Activated CD8-positive, alpha-beta T cell treated with anti-CD3 and anti-CD28 coated beads, Interleukin-2, amount 10 ng/mL, durations not matched to agents 7 days and 5 days (primary cell): ENCODE measurements at regions of chr11 and their contacts with region 1.

Region 1: GRCh38 chr11:47213985-47214564 is 699 bp upstream of the DDB2 start:
- DNase-seq: peak; percentile 91
- ATAC-seq: peak; percentile 81
- H3K4me3 Mint-ChIP-seq: peak overlapping the region; percentile 99
- H3K27ac Mint-ChIP-seq: peak overlapping the region; percentile 100
- H3K4me1 Mint-ChIP-seq: peaks cover 38% of the 10 kb centered on the region
- H3K27me3 Mint-ChIP-seq: no peaks in the 10 kb centered on the region

Region 2: DNA sequence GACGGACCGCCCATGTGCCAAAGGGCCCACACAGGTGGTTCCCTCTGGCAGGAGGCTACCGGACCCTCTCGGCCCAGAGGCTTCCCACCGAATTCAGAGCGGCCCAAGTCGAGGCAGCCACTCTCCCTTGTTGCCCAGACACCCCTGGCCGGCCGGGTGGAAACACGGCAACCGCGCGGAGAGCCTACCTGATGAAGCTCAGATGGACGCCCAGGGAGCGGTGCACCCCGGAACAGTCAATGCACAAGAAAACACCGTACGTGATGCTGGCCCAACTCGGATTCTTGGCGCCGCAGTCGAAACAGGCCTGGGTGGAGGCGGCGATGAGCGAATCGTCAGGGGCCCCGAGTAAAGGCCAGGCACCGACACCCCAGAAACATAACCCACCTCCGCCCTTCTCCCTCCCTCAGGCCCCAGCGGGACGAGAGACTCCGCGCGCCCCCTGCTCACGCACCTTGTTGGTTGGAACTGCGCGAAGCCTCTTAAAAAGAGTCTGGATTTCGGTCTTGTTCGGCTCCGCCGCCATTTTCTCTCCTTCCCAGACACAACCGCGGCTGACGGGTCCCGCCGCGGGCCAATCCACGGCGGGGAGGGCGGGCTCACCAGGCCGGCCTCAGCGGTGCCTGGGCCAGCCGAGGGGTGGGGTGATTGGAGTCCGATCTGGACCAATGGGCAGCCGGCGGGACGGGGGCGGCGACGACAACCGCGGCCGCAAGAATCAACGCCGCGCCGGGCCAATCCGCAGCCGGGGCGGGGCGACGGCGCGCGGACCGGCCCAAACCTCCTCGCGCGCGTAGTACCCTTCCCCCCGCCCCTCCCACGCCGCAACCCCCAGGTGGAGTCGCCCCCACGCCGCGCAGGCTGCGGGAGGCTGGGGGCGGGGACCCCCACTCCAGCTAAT is 37.5 kb before region 1 on chr11 and contains the start of gene ARFGAP2:
- CTCF ChIA-PET with region 1: interaction called, 38 read pairs
- POLR2A ChIA-PET with region 1: interaction called, 29 read pairs
- DNase-seq: peak; percentile 97
- ATAC-seq: peak; percentile 97
- H3K4me3 Mint-ChIP-seq: peak within 1 kb of the TSS; percentile 97
- H3K27ac Mint-ChIP-seq: peak within 1 kb of the TSS; percentile 99
- H3K4me1 Mint-ChIP-seq: peaks cover 45% of the 10 kb centered on the region
- H3K27me3 Mint-ChIP-seq: no peaks in the 10 kb centered on the region
- total RNA-seq, gene ARFGAP2: 89.6 to 102 TPM

Region 3: DNA sequence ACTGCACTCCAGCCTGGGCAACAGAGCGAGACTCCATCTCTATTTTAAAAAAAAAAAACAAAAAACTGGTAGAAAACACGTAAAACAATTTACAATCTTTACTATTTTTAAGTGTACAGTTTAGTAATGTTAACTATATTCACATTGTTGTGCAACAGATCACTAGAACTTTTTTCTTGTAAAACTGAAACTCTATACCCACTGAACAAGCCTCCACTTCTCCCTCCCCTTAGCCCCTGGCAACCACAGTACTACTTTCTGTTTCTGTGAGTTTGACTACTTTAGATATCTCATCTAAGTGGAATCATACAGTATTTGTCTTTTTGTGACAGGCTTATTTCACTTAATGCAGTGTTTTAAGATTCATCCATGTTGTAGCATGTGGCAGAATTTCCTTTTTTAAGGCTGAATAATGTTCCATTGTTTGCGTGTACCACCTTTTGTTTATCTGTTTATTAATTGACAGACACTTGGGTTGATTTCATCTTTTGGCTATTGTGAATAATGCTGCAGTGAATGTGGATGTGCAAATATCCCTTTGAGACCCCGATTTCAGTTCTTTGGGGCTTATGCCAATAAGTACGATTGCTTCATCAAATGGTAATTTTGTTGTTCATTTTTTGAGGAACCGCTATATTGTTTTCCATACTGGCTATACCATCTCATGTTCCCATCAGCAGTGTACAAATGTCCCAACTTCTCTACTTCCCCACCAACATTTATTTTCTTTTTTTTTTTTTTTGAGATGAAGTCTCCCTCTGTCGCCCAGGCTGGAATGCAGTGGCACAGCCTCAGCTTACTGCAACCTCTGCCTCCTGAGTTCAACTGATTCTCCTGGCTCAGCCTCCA is 11.7 kb after region 1 on chr11:
- CTCF ChIA-PET with region 1: interaction called, 4 read pairs
- POLR2A ChIA-PET with region 1: interaction called, 12 read pairs
- DNase-seq: peak; percentile 55
- ATAC-seq: peak; percentile 94
- H3K4me3 Mint-ChIP-seq: peak overlapping the region; percentile 52
- H3K27ac Mint-ChIP-seq: peak overlapping the region; percentile 86
- H3K4me1 Mint-ChIP-seq: peaks cover 28% of the 10 kb centered on the region
- H3K27me3 Mint-ChIP-seq: no peaks in the 10 kb centered on the region

Region 4: DNA sequence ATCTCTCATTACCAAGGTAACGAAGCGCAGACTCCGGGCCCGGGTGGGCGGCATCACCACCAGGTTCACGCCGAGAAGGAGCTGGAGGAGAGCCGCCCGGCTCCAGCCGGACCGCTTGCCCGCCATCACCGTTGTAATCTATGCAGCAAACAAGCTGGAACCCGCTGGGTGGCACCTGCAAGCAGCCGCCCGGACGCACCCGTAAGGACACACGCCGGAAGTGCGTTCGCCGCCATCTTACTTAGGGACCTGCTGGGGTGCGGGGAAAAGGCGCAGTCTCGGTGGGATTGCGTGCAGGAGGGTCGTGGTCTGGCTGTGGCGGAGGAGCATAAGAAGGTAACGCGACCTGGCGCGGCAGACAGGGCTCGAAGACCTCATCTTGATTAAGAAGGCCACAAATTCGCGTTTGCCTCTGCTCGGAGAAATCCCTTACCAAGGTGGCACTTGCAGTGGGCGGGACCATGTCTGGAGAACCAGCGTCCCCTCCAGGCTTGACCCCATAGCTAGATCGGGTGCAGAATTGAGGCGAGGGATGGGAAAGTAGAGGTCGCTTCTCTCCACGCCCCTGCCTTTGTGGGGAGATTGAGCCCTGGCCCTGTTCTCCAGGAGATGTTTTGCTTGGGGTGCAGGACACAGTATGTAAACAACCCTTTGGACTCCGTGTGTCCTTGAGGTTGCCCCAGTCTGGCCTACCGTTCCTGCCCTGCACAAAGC is 34.7 kb after region 1 on chr11 and contains the start of gene ACP2:
- CTCF ChIA-PET with region 1: interaction called, 8 read pairs
- POLR2A ChIA-PET with region 1: interaction called, 41 read pairs
- DNase-seq: peak; percentile 92
- ATAC-seq: peak; percentile 98
- H3K4me3 Mint-ChIP-seq: peak within 1 kb of the TSS; percentile 92
- H3K27ac Mint-ChIP-seq: peak within 1 kb of the TSS; percentile 95
- H3K4me1 Mint-ChIP-seq: peaks cover 30% of the 10 kb centered on the region
- H3K27me3 Mint-ChIP-seq: no peaks in the 10 kb centered on the region
- total RNA-seq, gene ACP2: 26.7 to 27.5 TPM

Region 5: DNA sequence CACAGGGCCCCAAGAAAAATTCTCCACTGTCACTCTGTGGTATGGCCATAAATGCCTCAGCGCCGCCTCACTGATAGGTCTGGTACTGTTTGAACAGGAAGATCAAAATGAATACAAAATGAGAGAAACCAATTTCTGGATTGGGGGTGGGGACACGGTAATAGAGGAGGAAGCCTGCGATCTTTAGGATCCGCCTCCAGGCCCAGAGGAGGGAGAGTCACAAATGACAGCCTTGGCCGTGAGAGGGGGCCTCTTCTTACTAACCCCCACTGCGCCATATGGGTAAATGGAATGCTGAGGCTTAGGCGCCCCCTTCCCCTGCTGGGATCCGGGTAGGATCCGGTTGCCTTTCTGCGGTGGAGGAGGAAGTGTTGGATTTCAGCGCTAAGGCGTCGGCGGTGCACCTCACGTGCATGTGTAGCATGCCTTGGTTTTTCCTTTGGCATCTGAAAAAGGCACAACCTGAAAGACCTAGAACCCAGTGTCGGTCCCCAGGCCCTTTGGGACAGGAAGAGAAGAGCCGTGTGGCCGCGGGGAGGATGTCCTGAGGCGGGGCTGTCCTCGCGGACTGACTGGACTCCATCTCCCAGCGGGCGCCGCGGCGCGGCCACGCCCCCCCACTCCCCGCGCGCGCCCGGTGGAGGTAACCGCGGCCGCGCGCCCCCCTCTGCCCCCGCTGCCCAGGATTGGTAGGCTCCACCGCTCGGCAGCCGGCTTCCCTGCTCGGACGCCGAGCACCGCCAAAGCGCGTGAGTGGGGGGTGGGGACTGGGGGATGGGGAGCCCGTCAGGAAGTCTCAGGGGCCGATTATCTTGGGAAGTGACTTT is 55.1 kb after region 1 on chr11:
- CTCF ChIA-PET with region 1: interaction called, 15 read pairs
- POLR2A ChIA-PET with region 1: interaction called, 26 read pairs
- DNase-seq: peak; percentile 90
- ATAC-seq: peak; percentile 55
- H3K4me3 Mint-ChIP-seq: peak overlapping the region; percentile 84
- H3K27ac Mint-ChIP-seq: peak overlapping the region; percentile 98
- H3K4me1 Mint-ChIP-seq: peaks cover 68% of the 10 kb centered on the region
- H3K27me3 Mint-ChIP-seq: no peaks in the 10 kb centered on the region